ENCODE measurements at regions of chr2 and their contacts with region 1.

Region 1: GRCh38 chr2:226791487-226792081 is 8.0 kb downstream of the IRS1 start:
- DNase-seq: peak; percentile 93 to 96 (median 95)
- ATAC-seq: peak; percentile 78 to 96 (median 90)
- H3K4me3 ChIP-seq: peak overlapping the region; percentile 43 to 97 (median 76)
- H3K27ac ChIP-seq: peak overlapping the region; percentile 88 to 98 (median 94)
- H3K4me1 ChIP-seq: peaks cover 0 to 88% (median 71%) of the 10 kb centered on the region in 12 donors
- H3K27me3 ChIP-seq: no peaks in the 10 kb centered on the region
- CTCF ChIP-seq: peak; percentile 10 to 65 (median 42)
- POLR2A ChIP-seq: peak in 1 of 2 donors; percentile 81

Region 2: DNA sequence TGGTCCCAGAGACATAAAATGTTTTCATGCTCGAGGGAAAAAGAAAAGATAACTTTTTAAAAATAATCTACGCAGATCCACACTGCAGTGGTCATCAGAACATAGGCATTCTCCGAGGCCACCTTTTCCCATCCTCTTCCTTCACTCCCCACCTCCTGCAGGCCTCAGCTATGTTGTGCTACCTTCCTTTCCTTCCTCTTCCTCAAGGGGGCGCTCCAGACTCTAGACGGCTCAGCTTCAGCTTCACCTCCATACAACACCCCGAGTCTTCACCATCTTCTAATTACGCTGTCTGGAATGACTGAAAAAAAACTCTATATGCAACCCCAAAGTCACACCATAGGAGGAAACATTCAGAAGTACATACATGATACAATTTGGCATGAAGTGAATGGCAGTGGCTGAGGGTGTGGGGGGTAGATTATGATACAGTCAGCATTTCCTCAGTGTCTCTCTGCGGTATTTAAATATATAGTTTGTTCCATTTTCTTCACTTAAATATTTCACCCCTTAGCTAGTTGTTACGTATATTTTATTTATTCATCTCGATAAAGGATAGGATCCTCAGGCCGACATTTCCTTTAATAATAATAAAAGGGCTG is 575.6 kb before region 1 on chr2:
- intact Hi-C with region 1: loop called in 3 of 10 experiments (anchors 2 to 10 kb)
- DNase-seq: peak in 4 of 5 donors; percentile 35 to 57 (median 42)
- ATAC-seq: peak; percentile 37 to 82 (median 80)
- H3K4me3 ChIP-seq: no peak overlapping the region
- H3K27ac ChIP-seq: no peak overlapping the region
- H3K4me1 ChIP-seq: peaks cover 0 to 14% (median 7%) of the 10 kb centered on the region in 12 donors
- H3K27me3 ChIP-seq: no peaks in the 10 kb centered on the region
- CTCF ChIP-seq: peak; percentile 46 to 74 (median 63)
- POLR2A ChIP-seq: no peak

Region 3: DNA sequence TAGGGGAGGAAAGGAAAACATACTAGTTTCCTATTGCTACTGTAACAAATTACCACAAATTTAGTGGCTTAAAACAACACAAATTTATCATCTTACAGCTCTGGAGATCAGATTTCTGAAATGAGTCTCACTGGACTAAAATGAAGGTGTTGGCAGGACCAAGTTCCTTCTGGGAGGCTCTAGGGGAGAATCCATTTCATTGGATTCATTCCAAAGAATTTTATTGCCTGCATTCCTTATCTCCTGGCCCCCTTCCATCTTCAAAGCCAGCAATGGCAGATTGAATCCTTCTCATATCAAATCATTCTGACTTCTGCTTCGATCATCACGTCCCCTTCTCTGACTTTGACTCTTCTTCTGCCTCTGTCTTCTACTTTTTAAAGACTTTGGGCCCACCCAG is 242.9 kb before region 1 on chr2:
- intact Hi-C with region 1: loop called in 2 of 10 experiments (anchors 10 kb)
- DNase-seq: no peak
- ATAC-seq: no peak
- H3K4me3 ChIP-seq: no peak overlapping the region
- H3K27ac ChIP-seq: no peak overlapping the region
- H3K4me1 ChIP-seq: peaks cover 0 to 9% (median 4%) of the 10 kb centered on the region in 12 donors
- H3K27me3 ChIP-seq: no peaks in the 10 kb centered on the region
- CTCF ChIP-seq: no peak
- POLR2A ChIP-seq: no peak

Region 4: DNA sequence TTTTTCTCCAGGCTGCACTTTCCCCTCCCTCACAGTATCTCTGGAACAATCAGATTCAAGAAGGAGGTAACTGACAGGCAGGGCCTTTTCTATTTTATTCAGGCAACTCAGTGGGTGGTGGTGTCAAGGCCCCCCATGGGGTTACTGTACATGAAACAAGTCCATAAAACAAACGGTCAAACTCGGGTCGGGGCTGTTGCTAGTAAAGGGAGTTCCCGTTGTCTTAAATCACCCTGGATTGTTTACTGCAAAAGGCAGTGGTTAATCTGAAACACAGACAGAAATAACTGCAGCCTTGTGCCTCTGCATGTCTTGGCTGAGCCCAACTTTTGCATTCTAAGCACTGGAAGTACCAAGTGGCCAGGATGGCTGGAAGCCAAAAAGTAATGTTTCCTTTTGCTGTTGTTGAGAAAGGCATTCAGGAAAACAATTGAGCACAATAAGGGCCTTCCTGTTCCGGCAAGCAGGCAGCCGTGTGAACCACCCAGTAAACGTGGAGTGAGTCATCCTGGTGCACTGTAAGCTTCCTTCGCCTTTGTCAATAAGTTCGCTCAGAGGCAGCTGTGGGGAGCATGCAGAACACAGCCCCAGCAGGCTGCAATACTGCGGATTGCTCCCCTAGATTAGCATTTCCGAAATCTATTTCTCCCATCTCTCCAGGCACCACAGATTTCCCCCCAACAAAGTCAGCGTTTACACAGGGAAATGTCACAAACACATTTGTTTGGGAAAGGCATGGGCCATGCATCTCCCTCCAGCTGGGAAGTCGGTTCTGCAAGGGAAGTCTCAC is 141.5 kb before region 1 on chr2:
- intact Hi-C with region 1: loop called (anchors 2 to 10 kb)
- DNase-seq: peak in 4 of 5 donors; percentile 66 to 80 (median 76)
- ATAC-seq: peak; percentile 87 to 98 (median 96)
- H3K4me3 ChIP-seq: no peak overlapping the region
- H3K27ac ChIP-seq: peak overlapping the region; percentile 34 to 86 (median 78)
- H3K4me1 ChIP-seq: peaks cover 0 to 33% (median 24%) of the 10 kb centered on the region in 12 donors
- H3K27me3 ChIP-seq: no peaks in the 10 kb centered on the region
- CTCF ChIP-seq: no peak
- POLR2A ChIP-seq: no peak

Region 5: GRCh38 chr2:226690461-226691024 is 101.0 kb before region 1 on chr2:
- intact Hi-C with region 1: loop called in 4 of 10 experiments (anchors 5 to 10 kb)
- DNase-seq: peak in 3 of 5 donors; percentile 37 to 43 (median 39)
- ATAC-seq: peak; percentile 56 to 84 (median 80)
- H3K4me3 ChIP-seq: peak overlapping the region in 6 of 12 donors; percentile 1 to 31 (median 15)
- H3K27ac ChIP-seq: peak overlapping the region in 11 of 12 donors; percentile 11 to 72 (median 69)
- H3K4me1 ChIP-seq: peaks cover 0 to 47% (median 33%) of the 10 kb centered on the region in 12 donors
- H3K27me3 ChIP-seq: no peaks in the 10 kb centered on the region
- CTCF ChIP-seq: no peak
- POLR2A ChIP-seq: no peak

Region 6: DNA sequence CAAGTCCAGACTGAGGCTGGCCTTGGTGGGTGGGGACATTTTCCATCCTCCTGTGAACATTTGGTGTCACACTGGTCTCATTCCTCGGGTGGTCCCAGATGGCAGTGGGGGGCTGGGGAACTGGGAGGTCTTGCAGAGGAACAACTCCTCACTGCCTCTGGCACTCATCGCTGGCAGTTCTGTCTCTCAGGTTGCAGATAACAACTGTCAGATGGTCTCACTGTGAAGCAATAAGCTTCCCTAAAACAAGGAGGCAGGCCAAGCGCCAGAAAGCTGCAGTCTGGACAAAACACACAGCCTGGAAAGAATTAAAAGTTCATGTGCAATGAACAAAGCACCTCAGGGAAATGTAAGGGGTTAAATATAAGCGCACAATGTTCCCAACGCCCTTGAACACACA is 70.0 kb before region 1 on chr2:
- intact Hi-C with region 1: loop called in 5 of 10 experiments (anchors 5 kb)
- DNase-seq: peak; percentile 24 to 68 (median 53)
- ATAC-seq: peak in 1 of 4 donors; percentile 16
- H3K4me3 ChIP-seq: no peak overlapping the region
- H3K27ac ChIP-seq: no peak overlapping the region
- H3K4me1 ChIP-seq: peaks cover 0 to 37% (median 12%) of the 10 kb centered on the region in 12 donors
- H3K27me3 ChIP-seq: no peaks in the 10 kb centered on the region
- CTCF ChIP-seq: no peak
- POLR2A ChIP-seq: no peak

Region 7: GRCh38 chr2:226742347-226742746 is 49.2 kb before region 1 on chr2:
- intact Hi-C with region 1: loop called in 4 of 10 experiments (anchors 5 to 10 kb)
- DNase-seq: peak in 4 of 5 donors; percentile 61 to 73 (median 64)
- ATAC-seq: peak; percentile 84 to 92 (median 89)
- H3K4me3 ChIP-seq: no peak overlapping the region
- H3K27ac ChIP-seq: peak overlapping the region; percentile 58 to 88 (median 74)
- H3K4me1 ChIP-seq: peaks cover 8 to 77% (median 41%) of the 10 kb centered on the region in 12 donors
- H3K27me3 ChIP-seq: no peaks in the 10 kb centered on the region
- CTCF ChIP-seq: no peak
- POLR2A ChIP-seq: no peak

Region 8: GRCh38 chr2:226860087-226860486 is 68.5 kb after region 1 on chr2:
- intact Hi-C with region 1: no loop called
- DNase-seq: no peak
- ATAC-seq: no peak
- H3K4me3 ChIP-seq: no peak overlapping the region
- H3K27ac ChIP-seq: no peak overlapping the region
- H3K4me1 ChIP-seq: peaks cover 0 to 8% (median 0%) of the 10 kb centered on the region in 12 donors
- H3K27me3 ChIP-seq: no peaks in the 10 kb centered on the region
- CTCF ChIP-seq: no peak
- POLR2A ChIP-seq: no peak

Region 9: DNA sequence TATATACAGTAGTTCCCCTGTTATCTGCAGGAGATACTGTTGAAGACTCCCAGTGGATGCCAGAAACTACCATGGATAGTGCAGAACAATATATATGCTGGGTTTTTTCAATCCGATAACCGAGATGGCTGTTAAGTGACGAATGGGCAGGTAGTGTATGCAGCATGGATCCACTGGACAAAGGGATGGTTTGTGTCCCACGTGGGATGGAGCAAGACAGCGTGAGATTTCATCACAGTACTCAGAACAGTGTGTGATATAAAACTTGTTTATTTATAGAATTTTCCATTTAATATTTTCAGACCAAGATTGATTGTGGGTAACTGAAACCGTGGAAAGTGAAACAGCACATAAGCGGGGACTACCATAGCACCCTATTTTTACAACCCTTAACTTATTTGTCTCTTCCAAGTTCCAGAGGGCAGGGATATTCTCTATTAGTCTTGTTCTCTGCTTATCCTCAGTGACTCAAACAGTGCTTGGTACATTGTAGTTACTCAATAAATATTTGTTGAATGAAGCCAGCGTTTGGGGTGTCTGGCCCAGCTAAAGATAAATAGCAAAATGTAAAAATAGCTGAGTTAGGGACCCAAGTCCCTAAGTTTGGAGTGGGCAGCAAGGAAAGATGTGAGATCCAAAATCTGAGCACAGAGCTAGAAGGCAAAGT is 94.3 kb after region 1 on chr2:
- intact Hi-C with region 1: no loop called
- DNase-seq: no peak
- ATAC-seq: no peak
- H3K4me3 ChIP-seq: no peak overlapping the region
- H3K27ac ChIP-seq: no peak overlapping the region
- H3K4me1 ChIP-seq: no peaks in the 10 kb centered on the region
- H3K27me3 ChIP-seq: no peaks in the 10 kb centered on the region
- CTCF ChIP-seq: no peak
- POLR2A ChIP-seq: no peak